Head of caudate nucleus (tissue), 42 donors: ENCODE measurements at regions of chr3 and their contacts with region 1.

Region 1: GRCh38 chr3:52001443-52001974 is 5.8 kb upstream of the RPL29 start:
- DNase-seq: peak; percentile 71 to 93 (median 84)

Region 2: GRCh38 chr3:51605938-51606337 is 395.6 kb before region 1 on chr3:
- intact Hi-C with region 1: no loop called
- DNase-seq: no peak

Region 3: GRCh38 chr3:51934139-51934850 is 67.2 kb before region 1 on chr3:
- intact Hi-C with region 1: no loop called
- DNase-seq: peak in 8 of 42 donors; percentile 2 to 35 (median 9)

Region 4: DNA sequence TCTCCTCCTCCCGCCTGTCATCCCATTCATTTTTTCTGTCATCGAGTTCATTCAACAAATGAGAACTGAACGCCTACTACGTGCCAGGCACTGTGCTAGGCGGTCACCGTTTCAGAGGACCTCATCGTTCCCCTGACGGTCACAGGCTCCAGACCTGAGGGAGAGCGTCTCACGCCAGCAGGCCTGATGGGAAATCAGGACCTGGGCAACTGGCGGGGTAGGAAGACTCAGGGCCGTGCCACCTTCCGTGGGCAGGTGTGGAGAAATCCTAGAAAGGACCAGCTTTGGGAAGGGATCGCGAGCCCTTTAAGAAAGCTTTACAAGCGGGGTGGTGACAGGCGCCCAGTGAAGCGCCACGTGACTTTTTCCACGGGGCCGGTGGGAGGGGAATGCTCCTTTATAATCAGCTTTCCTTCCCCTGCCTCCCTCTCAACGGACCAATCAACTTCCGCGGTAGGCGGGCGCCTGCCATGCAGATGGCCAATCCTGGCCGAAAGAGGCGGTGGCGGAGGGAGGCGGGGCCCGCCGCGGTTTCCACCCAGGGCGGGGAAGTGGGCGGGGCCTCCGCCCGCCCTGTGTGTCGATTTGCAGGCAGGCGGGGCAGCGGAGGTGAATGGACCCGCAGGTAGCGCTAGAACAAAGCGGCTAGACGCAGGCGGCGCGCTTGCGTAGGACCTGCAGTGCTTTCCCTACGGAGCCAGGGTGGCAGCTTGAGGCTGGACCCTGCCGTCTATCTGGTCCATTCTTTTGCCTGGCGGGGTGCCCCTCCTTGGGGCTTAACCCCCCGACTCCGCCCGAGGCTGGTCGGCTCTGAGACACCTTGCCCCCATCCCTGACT is 55.7 kb after region 1 on chr3:
- intact Hi-C with region 1: loop called (anchors 2 kb)
- DNase-seq: peak; percentile 99 to 100 (median 100)

Region 5: DNA sequence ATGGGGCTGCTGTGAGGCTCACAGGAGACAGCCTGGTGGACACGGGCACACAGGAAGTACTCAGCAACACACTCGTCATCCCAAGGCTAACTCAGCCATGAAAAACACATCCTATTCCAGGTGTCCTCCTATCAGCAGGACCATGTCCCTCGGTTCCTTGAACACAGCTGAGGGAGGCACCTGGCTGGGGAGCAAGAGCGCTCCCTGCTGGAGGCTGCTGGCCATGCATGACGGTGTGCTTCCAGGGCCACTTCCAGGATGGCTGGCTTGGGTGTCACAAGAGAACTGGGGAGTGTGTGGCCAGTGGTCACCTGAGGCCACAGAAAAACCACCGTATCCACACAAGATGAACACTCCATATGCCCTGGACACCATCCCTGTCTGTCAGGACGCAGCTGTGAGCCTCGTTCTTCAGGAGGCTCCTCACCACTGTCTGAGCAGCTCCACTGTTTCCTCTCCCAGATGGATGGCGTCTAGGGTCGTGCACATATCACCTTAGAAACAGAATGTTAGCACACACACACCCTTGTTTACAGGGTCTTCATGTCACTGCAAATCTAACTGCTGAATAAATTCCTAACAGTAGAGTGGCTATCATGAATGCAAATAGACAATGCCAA is 121.7 kb after region 1 on chr3:
- intact Hi-C with region 1: loop called (anchors 5 kb)
- DNase-seq: peak; percentile 61 to 92 (median 83)

Region 6: DNA sequence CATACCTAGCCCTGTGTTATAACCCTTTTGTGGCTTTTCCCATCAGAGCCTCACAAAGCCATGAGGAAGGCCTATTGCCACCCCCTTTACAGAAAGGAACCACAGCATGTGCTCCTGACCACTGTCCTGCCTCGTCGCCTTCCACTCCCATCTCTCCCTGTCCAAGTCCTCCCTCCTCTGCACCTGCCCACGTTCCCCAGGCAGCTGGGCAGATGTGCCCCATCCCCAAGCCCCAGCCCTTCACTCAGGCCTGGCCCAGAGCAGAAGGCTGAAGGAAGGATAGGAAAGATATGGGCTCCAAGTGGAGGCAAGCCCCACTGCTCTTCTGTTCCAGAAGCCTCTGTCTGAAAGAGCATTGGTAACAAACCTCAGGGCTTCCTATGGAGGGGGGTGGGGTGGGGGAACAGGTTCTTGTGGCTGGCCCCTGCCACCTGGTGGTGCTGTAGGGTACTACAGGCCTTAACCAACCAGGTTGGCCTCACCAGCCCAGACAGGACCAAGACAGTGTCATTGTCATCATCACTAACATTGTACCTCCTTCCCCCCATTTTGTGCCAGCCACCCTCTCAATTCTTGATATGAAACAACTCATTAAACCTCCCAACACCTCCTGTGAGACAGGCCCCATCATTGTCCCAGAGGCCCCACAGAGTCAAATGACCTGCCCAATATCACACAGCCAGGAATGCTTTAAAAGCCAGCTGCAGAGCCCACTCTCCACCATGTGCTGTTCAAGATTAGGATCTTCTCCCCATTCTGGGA is 142.7 kb after region 1 on chr3:
- intact Hi-C with region 1: loop called (anchors 1 kb)
- DNase-seq: peak; percentile 77 to 96 (median 90)